ENCODE measurements at regions of chr4 and their contacts with region 1.

Region 1: DNA sequence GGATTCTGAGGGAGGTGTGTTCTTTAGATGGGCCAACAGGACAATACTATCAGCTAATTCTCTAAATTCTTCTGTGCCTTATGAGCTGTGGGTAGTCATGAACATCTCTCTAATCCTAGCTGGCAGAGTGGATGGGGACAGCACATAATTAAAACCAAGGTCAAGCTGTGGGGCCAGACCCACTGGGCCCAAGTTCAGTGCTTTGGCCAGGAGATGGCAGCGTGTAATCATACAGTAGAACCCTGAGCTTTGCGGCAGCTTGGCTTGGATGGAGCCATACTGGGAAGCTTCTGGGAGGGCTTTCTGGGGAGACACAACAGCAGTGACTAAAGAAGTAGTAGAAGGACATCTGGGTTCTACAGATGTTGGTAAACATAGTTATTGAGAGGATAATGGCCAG is 140.3 kb upstream of the CXCL13 start:
- DNase-seq: no peak
- ATAC-seq: no peak
- H3K4me3 ChIP-seq: no peak overlapping the region
- H3K27ac ChIP-seq: no peak overlapping the region
- H3K4me1 ChIP-seq: no peaks in the 10 kb centered on the region
- H3K27me3 ChIP-seq: no peaks in the 10 kb centered on the region
- CTCF ChIP-seq: peak; percentile 10

Region 2: DNA sequence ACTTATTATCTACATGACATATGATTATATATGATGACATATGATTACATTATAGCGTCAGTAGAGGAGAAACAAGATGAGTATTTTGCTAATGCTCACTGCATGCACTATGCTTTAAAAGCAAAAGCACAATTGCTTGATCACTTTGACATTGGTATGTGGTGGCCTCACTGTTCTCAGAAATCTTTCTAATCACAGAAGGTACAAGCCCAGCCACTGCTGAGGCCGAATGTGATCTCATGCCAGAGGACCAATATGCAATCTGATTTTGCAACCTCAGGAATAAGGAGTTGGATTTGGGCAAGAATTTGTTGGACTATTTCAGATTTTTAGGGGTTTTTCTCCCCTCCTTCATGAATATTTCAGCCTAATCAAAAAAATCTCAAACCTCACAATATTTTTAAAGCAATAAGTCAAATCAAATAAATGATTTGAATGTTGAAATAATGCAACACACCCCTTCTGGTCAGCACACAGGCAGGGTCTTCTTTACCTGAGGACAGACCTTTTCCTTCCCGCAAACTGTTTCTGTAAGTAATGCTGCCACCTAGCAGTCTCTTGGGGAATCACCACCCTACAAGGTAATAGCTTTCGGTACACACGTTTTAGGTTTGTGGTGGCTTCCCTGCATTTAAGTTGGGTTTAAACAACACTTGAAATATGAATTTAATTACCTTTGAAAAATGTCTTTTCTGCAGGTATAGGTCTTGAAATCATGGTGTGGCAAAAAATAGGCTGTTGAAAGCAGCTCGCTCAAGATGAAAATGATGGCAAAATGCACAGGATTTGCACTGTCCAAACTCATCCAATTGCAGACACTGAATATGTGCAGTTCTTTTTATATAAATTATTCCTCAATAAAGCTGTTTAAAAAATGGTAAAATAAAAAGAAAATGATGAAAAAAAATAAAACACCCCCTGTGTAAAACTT is 135.5 kb after region 1 on chr4:
- intact Hi-C with region 1: loop called in 1 of 2 experiments (anchors 10 kb)
- DNase-seq: no peak
- ATAC-seq: peak in 1 of 4 donors; percentile 66
- H3K4me3 ChIP-seq: no peak overlapping the region
- H3K27ac ChIP-seq: no peak overlapping the region
- H3K4me1 ChIP-seq: no peaks in the 10 kb centered on the region
- H3K27me3 ChIP-seq: no peaks in the 10 kb centered on the region
- CTCF ChIP-seq: peak; percentile 58